Activated T-helper 2 cell treated with anti-CD3 and anti-CD28 coated beads, Interferon-gamma antibody, Interleukin-2, Interleukin-4, amounts not matched to agents 10 μg/mL and 5 μg/mL and 100 μg/mL, durations not matched to agents 14 hours and 24 hours and 36 hours (primary cell): ENCODE measurements at regions of chr9 and their contacts with region 1.

Region 1: DNA sequence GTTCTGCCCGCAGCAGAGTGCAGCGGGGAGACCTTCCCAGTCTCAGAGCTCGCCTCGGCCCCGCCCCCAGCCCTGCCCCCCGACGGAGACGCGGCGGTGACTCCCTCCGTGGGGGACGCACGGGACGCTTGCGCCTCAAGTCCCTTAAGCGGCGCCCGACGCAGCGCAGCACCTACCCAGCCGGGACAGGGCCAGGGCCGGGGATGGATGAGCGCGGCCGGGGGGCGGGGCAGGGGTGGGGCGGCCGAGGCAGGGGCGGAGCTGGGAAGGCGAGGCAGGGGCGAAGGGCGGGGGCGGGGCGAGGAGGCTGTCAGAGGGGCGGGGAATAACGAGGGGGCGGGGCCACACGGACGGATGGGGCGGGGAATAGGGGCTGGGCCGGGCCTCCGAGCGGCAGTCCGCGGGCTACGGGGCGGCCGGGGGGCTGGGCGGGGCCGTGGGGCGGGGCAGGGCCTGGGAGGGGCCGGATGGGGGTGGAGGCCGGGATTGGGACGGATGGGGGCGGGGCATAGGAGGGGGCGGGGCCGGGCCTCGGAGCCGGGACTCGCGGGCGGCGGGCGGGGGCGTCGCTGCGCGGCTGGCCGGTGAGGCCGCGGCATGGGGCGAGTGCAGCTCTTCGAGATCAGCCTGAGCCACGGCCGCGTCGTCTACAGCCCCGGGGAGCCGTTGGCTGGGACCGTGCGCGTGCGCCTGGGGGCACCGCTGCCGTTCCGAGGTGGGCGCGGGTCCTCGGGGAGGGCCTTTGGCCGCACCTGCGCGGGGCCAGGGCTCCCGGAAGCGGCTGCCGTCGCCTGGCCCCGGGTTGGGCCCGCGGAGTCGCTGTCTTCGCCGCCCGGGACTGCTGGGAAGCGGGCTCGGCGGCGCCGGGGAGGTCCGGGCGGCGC is at the start of gene ARRDC1:
- DNase-seq: peak; percentile 86
- H3K4me3 Mint-ChIP-seq: peak within 1 kb of the TSS; percentile 82
- H3K27ac Mint-ChIP-seq: peak within 1 kb of the TSS; percentile 62
- H3K4me1 Mint-ChIP-seq: peaks cover 18% of the 10 kb centered on the region
- H3K27me3 Mint-ChIP-seq: no peaks in the 10 kb centered on the region
- total RNA-seq, gene ARRDC1: 71.1 and 73.1 TPM in 2 replicates

Region 2: DNA sequence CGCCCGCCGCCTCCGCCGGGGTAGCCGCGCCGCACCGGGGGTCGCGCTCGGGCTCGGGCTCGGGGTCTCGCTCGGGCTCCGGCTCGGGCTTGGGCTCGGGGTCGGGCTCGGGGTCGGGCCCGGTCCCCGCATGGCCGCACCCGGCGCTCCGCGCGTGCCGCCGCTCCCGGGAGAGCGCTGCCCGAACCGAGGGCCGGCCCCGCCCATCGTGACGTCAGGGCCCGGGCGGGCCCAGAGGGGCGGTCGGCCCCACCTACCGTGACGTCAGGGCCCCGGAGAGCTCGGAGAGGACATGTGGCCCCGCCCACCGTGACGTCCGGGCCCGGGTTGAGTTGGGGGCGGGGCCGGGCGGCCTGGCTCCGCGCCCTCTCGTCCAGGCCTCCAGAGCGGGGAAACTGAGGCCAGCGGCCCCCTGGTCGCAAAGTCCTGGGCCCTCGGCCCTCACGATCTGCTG is 146.2 kb before region 1 on chr9 and contains the start of gene NSMF:
- intact Hi-C with region 1: loop called (anchors 10 kb)
- DNase-seq: peak; percentile 93
- H3K4me3 Mint-ChIP-seq: peak within 1 kb of the TSS; percentile 13
- H3K27ac Mint-ChIP-seq: peak within 1 kb of the TSS; percentile 65
- H3K4me1 Mint-ChIP-seq: peaks cover 11% of the 10 kb centered on the region
- H3K27me3 Mint-ChIP-seq: no peaks in the 10 kb centered on the region
- total RNA-seq, gene NSMF: 56.1 and 57.6 TPM in 2 replicates

Region 3: DNA sequence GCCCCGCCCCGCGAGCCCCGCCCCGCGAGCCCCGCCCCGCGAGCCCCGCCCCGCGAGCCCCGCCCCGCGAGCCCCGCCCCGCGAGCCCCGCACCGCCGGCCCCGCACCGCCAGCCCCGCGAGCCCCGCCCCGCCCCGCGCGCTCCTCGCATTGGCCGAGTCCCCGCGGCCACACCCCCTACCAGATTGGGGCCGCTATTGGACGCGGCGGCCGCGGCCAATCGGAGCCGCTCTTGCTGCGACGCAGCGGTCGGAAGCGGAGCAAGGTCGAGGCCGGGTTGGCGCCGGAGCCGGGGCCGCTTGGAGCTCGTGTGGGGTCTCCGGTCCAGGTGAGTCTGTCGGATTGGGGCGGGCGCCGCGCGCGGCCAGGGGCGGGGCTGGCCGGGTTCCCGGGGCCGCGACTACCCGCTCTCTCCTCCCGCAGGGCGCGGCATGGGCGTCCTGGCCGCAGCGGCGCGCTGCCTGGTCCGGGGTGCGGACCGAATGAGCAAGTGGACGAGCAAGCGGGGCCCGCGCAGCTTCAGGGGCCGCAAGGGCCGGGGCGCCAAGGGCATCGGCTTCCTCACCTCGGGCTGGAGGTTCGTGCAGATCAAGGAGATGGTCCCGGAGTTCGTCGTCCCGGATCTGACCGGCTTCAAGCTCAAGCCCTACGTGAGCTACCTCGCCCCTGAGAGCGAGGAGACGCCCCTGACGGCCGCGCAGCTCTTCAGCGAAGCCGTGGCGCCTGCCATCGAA is 53.5 kb before region 1 on chr9 and contains the start of gene MRPL41:
- intact Hi-C with region 1: loop called (anchors 1 kb)
- DNase-seq: peak; percentile 90
- H3K4me3 Mint-ChIP-seq: peak within 1 kb of the TSS; percentile 90
- H3K27ac Mint-ChIP-seq: peak within 1 kb of the TSS; percentile 69
- H3K4me1 Mint-ChIP-seq: peaks cover 8% of the 10 kb centered on the region
- H3K27me3 Mint-ChIP-seq: no peaks in the 10 kb centered on the region
- total RNA-seq, gene MRPL41: 43.2 and 49.4 TPM in 2 replicates

Region 4: DNA sequence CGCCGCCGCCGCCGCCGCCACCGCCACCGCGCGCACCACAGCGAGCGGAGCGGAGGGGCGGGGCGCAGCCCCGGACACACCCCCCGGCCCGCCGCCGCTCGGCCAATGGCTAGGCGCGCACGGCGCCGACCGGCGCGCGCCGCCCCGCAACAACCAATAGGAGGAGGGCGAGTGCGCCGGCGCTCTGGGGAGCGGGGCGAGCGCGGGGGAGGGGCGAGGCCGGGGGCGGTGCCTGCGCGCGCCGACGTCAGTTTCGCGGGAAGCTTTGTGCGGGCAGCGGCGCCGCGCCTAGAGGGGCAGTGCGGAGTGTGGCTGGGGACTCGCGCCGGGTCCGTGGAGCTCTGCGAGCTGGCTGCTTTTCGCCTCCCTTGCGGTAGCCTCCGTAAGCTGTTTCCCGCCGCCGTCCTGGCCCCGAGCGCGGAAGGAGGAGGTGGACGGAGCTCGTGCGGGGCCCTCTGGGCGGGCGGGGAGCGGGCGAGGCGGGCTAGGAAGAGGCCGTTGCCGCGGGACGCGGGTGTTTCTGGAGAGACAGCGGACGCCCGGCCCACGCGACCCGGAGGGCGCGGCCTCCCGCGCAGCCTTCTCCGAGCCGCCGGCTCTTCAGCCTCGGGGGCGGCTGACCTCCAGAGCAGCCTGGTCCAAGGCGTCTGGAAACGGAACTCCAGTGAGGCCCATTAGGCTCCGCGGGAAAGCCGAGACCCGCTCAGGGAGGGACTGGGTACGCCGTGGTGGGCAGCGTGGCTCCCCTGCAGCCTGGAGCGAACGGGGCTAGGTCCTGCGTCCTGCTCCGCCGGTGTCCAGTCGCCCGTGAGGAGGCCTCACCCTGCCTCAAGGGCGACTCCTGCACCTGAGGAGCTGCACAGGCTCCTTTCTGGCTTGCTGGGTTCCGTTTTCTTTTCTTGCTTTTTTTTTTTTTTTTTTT is 14.6 kb before region 1 on chr9 and contains the start of gene ZMYND19:
- intact Hi-C with region 1: loop called (anchors 1 kb)
- DNase-seq: peak; percentile 87
- H3K4me3 Mint-ChIP-seq: peak within 1 kb of the TSS; percentile 99
- H3K27ac Mint-ChIP-seq: peak within 1 kb of the TSS; percentile 95
- H3K4me1 Mint-ChIP-seq: peaks cover 6% of the 10 kb centered on the region
- H3K27me3 Mint-ChIP-seq: no peaks in the 10 kb centered on the region
- total RNA-seq, gene ZMYND19: 72.4 and 74.4 TPM in 2 replicates

Region 5: GRCh38 chr9:137618105-137619067 is 13.0 kb after region 1 on chr9 and contains the start of gene EHMT1:
- intact Hi-C with region 1: loop called (anchors 1 kb)
- DNase-seq: peak; percentile 89
- H3K4me3 Mint-ChIP-seq: peak within 1 kb of the TSS; percentile 87
- H3K27ac Mint-ChIP-seq: peak within 1 kb of the TSS; percentile 87
- H3K4me1 Mint-ChIP-seq: peaks cover 21% of the 10 kb centered on the region
- H3K27me3 Mint-ChIP-seq: no peaks in the 10 kb centered on the region
- total RNA-seq, gene EHMT1: 96.5 and 103 TPM in 2 replicates

Region 6: GRCh38 chr9:137757613-137758029 is 152.3 kb after region 1 on chr9:
- intact Hi-C with region 1: no loop called
- DNase-seq: no peak
- H3K4me3 Mint-ChIP-seq: no peak overlapping the region
- H3K27ac Mint-ChIP-seq: peak overlapping the region; percentile 65
- H3K4me1 Mint-ChIP-seq: peaks cover 22% of the 10 kb centered on the region
- H3K27me3 Mint-ChIP-seq: no peaks in the 10 kb centered on the region